ENCODE measurements at regions of chr18 and their contacts with region 1.

Region 1: GRCh38 chr18:35267161-35267651 is 22.8 kb downstream of the ZSCAN30 start:
- DNase-seq: peak; percentile 88 to 95 (median 90)
- H3K4me3 ChIP-seq: peak overlapping the region; percentile 23 to 78 (median 67)
- H3K27ac ChIP-seq: peak overlapping the region; percentile 54 to 82
- H3K4me1 ChIP-seq: peaks cover 0 to 11% (median 8%) of the 10 kb centered on the region in 4 experiments
- H3K27me3 ChIP-seq: no peaks in the 10 kb centered on the region

Region 2: GRCh38 chr18:35290073-35290735 is 23.0 kb after region 1 on chr18 and contains the start of gene ZSCAN30:
- CTCF ChIA-PET with region 1: interaction called, 4 read pairs
- POLR2A ChIA-PET with region 1: interaction called, 16 read pairs
- DNase-seq: peak; percentile 97 to 99 (median 98)
- H3K4me3 ChIP-seq: peak within 1 kb of the TSS; percentile 59 to 98 (median 93)
- H3K27ac ChIP-seq: peak within 1 kb of the TSS; percentile 91 to 96
- H3K4me1 ChIP-seq: peaks cover 8 to 19% (median 14%) of the 10 kb centered on the region in 4 experiments
- H3K27me3 ChIP-seq: no peaks in the 10 kb centered on the region

Measured in common myeloid progenitor, CD34-positive (primary cell).